ENCODE measurements at regions of chr18 and their contacts with region 1.

Region 1: GRCh38 chr18:35005963-35006577 is 35.1 kb upstream of the MAPRE2 start:
- DNase-seq: peak in 3 of 35 experiments; percentile 15 to 75 (median 36)
- ATAC-seq: peak in 3 of 4 experiments; percentile 75 to 80 (median 79)
- H3K4me3 ChIP-seq: no peak overlapping the region
- H3K4me3 Mint-ChIP-seq: no peak overlapping the region
- H3K27ac ChIP-seq: no peak overlapping the region
- H3K27ac Mint-ChIP-seq: no peak overlapping the region
- H3K4me1 ChIP-seq: no peaks in the 10 kb centered on the region
- H3K4me1 Mint-ChIP-seq: no peaks in the 10 kb centered on the region
- H3K27me3 ChIP-seq: no peaks in the 10 kb centered on the region
- H3K27me3 Mint-ChIP-seq: no peaks in the 10 kb centered on the region

Region 2: GRCh38 chr18:34921226-34921625 is 84.8 kb before region 1 on chr18:
- CTCF ChIA-PET with region 1: no interaction called
- POLR2A ChIA-PET with region 1: no interaction called
- DNase-seq: no peak
- ATAC-seq: no peak
- H3K4me3 ChIP-seq: no peak overlapping the region
- H3K4me3 Mint-ChIP-seq: no peak overlapping the region
- H3K27ac ChIP-seq: no peak overlapping the region
- H3K27ac Mint-ChIP-seq: no peak overlapping the region
- H3K4me1 ChIP-seq: no peaks in the 10 kb centered on the region
- H3K4me1 Mint-ChIP-seq: no peaks in the 10 kb centered on the region
- H3K27me3 ChIP-seq: no peaks in the 10 kb centered on the region
- H3K27me3 Mint-ChIP-seq: peaks cover 5 to 12% of the 10 kb centered on the region in 2 donors

Region 3: DNA sequence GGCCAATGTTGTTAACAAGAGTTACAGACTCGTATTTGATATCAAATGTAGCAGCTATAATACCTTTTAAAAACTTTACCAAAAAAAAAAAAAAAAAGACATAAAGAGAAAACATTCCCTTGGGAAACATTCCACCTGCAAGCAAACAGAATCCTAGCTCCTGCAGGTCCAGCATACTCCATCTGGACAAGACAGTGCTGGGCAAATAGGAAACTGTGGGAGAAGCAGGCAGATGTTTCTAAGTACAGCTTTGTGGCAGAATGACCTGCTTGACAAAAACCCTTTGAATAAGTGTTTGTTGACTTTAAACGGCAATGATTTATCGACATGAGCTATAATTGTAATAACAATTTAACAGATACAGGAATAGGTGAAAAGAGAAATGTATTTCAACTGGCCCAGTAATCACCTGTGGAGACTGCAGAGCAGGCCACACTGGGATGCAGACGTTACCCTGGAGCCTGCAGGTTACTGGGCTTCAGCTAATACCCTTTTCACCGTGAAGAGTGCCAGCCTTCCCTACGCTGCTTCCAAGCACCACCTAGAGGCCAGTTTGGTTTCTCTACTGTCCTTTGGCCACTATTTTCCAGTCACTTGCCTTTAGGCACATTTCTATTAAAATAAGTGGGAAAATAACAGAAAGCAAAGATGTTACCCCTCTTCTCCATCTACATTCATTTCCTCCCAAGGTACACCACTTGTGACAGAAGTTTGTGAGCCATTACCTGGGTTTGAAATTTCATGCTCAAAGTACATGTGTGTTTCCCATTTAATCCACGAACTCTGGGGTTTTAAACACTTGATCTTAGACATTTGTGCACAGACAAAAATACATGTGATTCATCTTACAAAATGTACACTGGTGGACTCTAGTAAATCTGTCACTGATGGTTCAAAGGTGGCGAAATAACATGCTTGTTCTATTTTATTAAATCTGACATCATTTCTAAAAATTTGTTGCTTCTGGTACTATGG is 137.8 kb after region 1 on chr18:
- CTCF ChIA-PET with region 1: interaction called, 7 to 16 read pairs
- POLR2A ChIA-PET with region 1: no interaction called
- DNase-seq: peak in 25 of 35 experiments; percentile 6 to 61 (median 28)
- ATAC-seq: peak in 3 of 4 experiments; percentile 61 to 81 (median 78)
- H3K4me3 ChIP-seq: no peak overlapping the region
- H3K4me3 Mint-ChIP-seq: no peak overlapping the region
- H3K27ac ChIP-seq: no peak overlapping the region
- H3K27ac Mint-ChIP-seq: peak overlapping the region in 1 of 2 donors; percentile 40
- H3K4me1 ChIP-seq: no peaks in the 10 kb centered on the region
- H3K4me1 Mint-ChIP-seq: peaks cover 0 to 10% (median 3%) of the 10 kb centered on the region in 3 donors
- H3K27me3 ChIP-seq: no peaks in the 10 kb centered on the region
- H3K27me3 Mint-ChIP-seq: no peaks in the 10 kb centered on the region

Measured in T-cell (primary cell).